Common myeloid progenitor, CD34-positive (primary cell): ENCODE measurements at regions of chr12 and their contacts with region 1.

Region 1: DNA sequence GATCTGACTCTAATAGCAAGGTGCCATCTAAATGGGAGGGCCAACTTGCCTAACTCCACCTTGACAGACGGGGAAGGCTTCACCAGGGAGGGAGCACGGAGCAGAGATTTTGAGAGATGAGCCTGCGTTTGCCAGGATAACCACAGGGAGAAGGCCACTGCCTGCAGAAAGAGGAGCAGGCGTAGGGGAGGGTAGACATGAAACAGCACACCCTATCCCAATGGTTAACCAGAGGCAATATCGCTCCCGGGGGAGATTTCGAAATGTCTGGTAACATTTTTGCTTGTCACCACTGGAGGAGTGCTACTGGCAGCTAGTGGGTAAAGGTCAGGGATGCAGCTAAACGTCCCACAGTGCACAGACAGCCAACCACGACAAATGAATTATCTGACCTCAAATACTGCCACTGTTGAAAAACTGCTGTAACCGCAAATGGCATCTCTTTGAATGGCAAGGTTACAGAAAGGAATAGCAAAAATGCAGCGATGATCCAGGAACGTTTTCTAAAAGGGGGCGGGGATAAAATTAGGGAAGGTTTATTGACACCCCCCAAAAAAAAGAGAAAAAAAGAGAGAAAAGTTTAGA is 126.0 kb upstream of the ATF7IP start:
- DNase-seq: peak; percentile 76 to 91 (median 89)
- H3K4me3 ChIP-seq: peak overlapping the region in 6 of 7 experiments; percentile 9 to 75 (median 40)
- H3K27ac ChIP-seq: peak overlapping the region in 1 of 2 experiments; percentile 41
- H3K4me1 ChIP-seq: peaks cover 5 to 17% (median 13%) of the 10 kb centered on the region in 4 experiments
- H3K27me3 ChIP-seq: no peaks in the 10 kb centered on the region

Region 2: GRCh38 chr12:14185427-14186192 is 53.8 kb before region 1 on chr12:
- CTCF ChIA-PET with region 1: interaction called, 10 read pairs
- POLR2A ChIA-PET with region 1: no interaction called
- DNase-seq: peak; percentile 34 to 59 (median 47)
- H3K4me3 ChIP-seq: no peak overlapping the region
- H3K27ac ChIP-seq: no peak overlapping the region
- H3K4me1 ChIP-seq: no peaks in the 10 kb centered on the region
- H3K27me3 ChIP-seq: peaks cover 0 to 2% (median 0%) of the 10 kb centered on the region in 5 experiments

Region 3: GRCh38 chr12:14365294-14366208 is 126.1 kb after region 1 on chr12 and contains the start of gene ATF7IP:
- CTCF ChIA-PET with region 1: interaction called, 14 read pairs
- POLR2A ChIA-PET with region 1: no interaction called
- DNase-seq: peak; percentile 99 to 100 (median 99)
- H3K4me3 ChIP-seq: peak within 1 kb of the TSS; percentile 74 to 91 (median 84)
- H3K27ac ChIP-seq: peak within 1 kb of the TSS; percentile 90 to 96
- H3K4me1 ChIP-seq: peaks cover 8 to 23% (median 13%) of the 10 kb centered on the region in 4 experiments
- H3K27me3 ChIP-seq: no peaks in the 10 kb centered on the region

Region 4: DNA sequence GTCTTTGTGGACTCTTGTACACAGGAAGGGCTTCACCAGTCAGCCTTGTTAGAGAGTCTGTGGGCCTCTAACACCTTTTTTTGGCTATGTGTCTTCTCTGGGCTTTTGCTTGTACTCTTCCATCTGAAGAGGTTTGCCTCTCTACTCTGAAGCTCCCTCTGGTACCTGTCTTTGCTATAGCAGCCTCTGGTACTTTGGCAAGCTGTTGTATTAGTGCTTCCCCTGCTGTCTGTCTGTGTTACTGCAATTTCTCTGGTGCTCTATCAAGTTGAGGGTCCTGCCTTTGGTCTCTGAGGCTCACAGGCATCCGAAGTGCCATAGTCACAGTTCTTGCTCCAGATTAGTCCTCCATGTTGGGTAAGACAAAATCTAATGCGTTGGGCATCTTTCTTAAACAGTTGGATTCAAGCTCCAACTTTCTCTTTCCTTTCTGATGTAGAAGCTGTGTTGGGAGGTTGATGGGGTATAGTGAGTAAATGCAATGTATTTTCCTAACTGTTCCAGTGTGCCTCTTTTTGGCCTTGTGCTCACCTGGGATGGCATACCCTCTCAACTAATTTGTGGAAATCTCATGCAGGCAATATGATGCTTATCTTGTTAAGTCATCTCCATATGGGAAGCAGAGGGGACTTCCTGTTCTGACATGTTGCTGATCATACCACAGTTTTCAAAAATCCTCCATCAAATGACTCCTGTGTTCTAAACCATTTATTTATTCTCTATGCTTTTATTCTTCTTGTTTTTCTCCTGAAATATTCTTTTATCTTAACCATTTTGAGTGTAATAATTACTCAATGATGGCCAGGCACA is 214.9 kb after region 1 on chr12:
- CTCF ChIA-PET with region 1: interaction called, 56 read pairs
- POLR2A ChIA-PET with region 1: no interaction called
- DNase-seq: peak; percentile 79 to 87 (median 83)
- H3K4me3 ChIP-seq: no peak overlapping the region
- H3K27ac ChIP-seq: no peak overlapping the region
- H3K4me1 ChIP-seq: peaks cover 0 to 6% (median 0%) of the 10 kb centered on the region in 4 experiments
- H3K27me3 ChIP-seq: no peaks in the 10 kb centered on the region

Region 5: DNA sequence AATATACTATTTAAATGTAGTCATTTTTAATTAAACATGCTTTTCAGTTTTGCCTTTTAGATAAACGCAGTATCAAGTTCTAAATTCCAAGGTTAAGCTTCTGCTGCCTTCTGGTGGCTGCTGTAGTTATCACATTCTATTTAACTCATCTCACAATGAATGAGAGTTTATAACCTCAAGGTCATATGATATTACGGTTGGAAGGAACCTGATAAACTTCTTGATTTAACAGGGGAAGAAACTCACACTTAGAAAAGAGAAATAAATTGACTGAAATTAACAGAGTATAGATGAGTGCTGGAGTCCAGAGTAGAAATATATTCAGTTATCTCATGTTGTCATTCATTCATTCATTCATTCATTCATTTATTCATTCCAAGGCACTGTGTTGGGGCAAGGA is 425.1 kb after region 1 on chr12:
- CTCF ChIA-PET with region 1: interaction called, 22 read pairs
- POLR2A ChIA-PET with region 1: no interaction called
- DNase-seq: peak; percentile 73 to 86 (median 84)
- H3K4me3 ChIP-seq: no peak overlapping the region
- H3K27ac ChIP-seq: no peak overlapping the region
- H3K4me1 ChIP-seq: peaks cover 0 to 2% (median 0%) of the 10 kb centered on the region in 4 experiments
- H3K27me3 ChIP-seq: peaks cover 0 to 15% (median 3%) of the 10 kb centered on the region in 5 experiments